Panc1 (cell line): ENCODE measurements at regions of chr12 and their contacts with region 1.

Region 1: GRCh38 chr12:1533602-1534304 is 60.6 kb downstream of the FBXL14 start:
- DNase-seq: no peak
- ATAC-seq: 0 out of 2 replicates have a peak, but pooled peaks have one; percentile 2
- H3K4me3 ChIP-seq: peak overlapping the region; percentile 21 to 51
- H3K27ac ChIP-seq: peak overlapping the region; percentile 84
- H3K4me1 ChIP-seq: peaks cover 34% of the 10 kb centered on the region
- H3K27me3 ChIP-seq: no peaks in the 10 kb centered on the region
- CTCF ChIP-seq: no peak

Region 2: DNA sequence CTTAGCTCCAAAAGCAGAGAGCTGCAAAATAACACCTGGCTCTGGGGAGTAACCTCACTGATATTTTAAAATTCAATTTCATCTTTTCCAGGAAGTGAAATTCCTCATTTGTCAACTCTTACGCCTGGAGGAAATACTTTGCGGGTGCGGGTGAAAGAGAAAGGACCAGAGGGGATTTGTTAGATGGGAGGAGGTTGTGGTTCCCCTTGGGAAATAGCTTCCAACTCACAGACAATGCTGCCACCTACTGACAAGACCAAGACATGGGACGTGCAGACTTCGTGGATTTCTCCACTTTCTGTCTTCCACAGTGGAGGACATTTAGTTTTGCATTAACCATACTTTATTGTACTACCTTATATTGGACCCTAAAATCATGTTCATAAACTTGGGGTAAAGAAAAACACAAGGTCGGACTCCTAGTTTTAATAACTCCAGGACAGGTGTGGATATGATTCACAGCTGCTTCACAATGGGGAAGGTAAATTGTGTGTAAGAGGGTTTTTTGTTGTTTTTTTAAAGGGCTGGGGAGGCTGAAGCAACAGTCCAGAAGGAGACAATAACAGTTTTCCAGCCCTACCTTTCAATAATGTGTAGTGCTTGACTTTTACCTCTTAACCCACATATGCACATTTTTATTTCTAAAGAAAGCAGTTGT is 49.8 kb after region 1 on chr12:
- CTCF ChIA-PET with region 1: no interaction called
- POLR2A ChIA-PET with region 1: no interaction called
- in situ Hi-C with region 1: no loop called
- intact Hi-C with region 1: loop called (anchors 2 kb)
- DNase-seq: no peak
- ATAC-seq: peak; percentile 61; the same call in 1 of the 2 replicates
- H3K4me3 ChIP-seq: no peak overlapping the region
- H3K27ac ChIP-seq: peak overlapping the region; percentile 51
- H3K4me1 ChIP-seq: peaks cover 47% of the 10 kb centered on the region
- H3K27me3 ChIP-seq: no peaks in the 10 kb centered on the region
- CTCF ChIP-seq: peak; percentile 80

Region 3: GRCh38 chr12:1611803-1612572 is 78.2 kb after region 1 on chr12:
- CTCF ChIA-PET with region 1: no interaction called
- POLR2A ChIA-PET with region 1: no interaction called
- in situ Hi-C with region 1: no loop called
- intact Hi-C with region 1: no loop called
- DNase-seq: no peak
- ATAC-seq: no peak
- H3K4me3 ChIP-seq: no peak overlapping the region
- H3K27ac ChIP-seq: no peak overlapping the region
- H3K4me1 ChIP-seq: peaks cover 4% of the 10 kb centered on the region
- H3K27me3 ChIP-seq: no peaks in the 10 kb centered on the region
- CTCF ChIP-seq: no peak

Region 4: GRCh38 chr12:1622406-1622805 is 88.7 kb after region 1 on chr12:
- CTCF ChIA-PET with region 1: no interaction called
- POLR2A ChIA-PET with region 1: no interaction called
- in situ Hi-C with region 1: no loop called
- intact Hi-C with region 1: no loop called
- DNase-seq: no peak
- ATAC-seq: no peak
- H3K4me3 ChIP-seq: no peak overlapping the region
- H3K27ac ChIP-seq: no peak overlapping the region
- H3K4me1 ChIP-seq: peaks cover 4% of the 10 kb centered on the region; the same call in 1 of the 2 replicates
- H3K27me3 ChIP-seq: no peaks in the 10 kb centered on the region
- CTCF ChIP-seq: no peak